ENCODE measurements at regions of chr1 and their contacts with region 1.

Region 1: GRCh38 chr1:89987170-89987819 is 7.6 kb upstream of the ZNF326 start:
- DNase-seq: peak in 12 of 14 experiments; percentile 19 to 83 (median 45)
- ATAC-seq: peak; percentile 93
- H3K4me3 ChIP-seq: no peak overlapping the region
- H3K4me3 Mint-ChIP-seq: no peak overlapping the region
- H3K27ac ChIP-seq: no peak overlapping the region
- H3K27ac Mint-ChIP-seq: no peak overlapping the region
- H3K4me1 ChIP-seq: no peaks in the 10 kb centered on the region
- H3K4me1 Mint-ChIP-seq: no peaks in the 10 kb centered on the region
- H3K27me3 ChIP-seq: no peaks in the 10 kb centered on the region
- H3K27me3 Mint-ChIP-seq: no peaks in the 10 kb centered on the region
- CTCF ChIP-seq: peak; percentile 89

Region 2: GRCh38 chr1:89780721-89781120 is 206.6 kb before region 1 on chr1:
- CTCF ChIA-PET with region 1: interaction called, 4 read pairs
- POLR2A ChIA-PET with region 1: interaction called, 5 read pairs
- intact Hi-C with region 1: loop called (anchors 1 to 2 kb)
- DNase-seq: peak in 3 of 14 experiments; percentile 51 to 66 (median 65)
- ATAC-seq: peak; percentile 80
- H3K4me3 ChIP-seq: no peak overlapping the region
- H3K4me3 Mint-ChIP-seq: no peak overlapping the region
- H3K27ac ChIP-seq: no peak overlapping the region
- H3K27ac Mint-ChIP-seq: no peak overlapping the region
- H3K4me1 ChIP-seq: peaks cover 13% of the 10 kb centered on the region
- H3K4me1 Mint-ChIP-seq: peaks cover 23% of the 10 kb centered on the region
- H3K27me3 ChIP-seq: no peaks in the 10 kb centered on the region
- H3K27me3 Mint-ChIP-seq: no peaks in the 10 kb centered on the region
- CTCF ChIP-seq: peak; percentile 48

Region 3: DNA sequence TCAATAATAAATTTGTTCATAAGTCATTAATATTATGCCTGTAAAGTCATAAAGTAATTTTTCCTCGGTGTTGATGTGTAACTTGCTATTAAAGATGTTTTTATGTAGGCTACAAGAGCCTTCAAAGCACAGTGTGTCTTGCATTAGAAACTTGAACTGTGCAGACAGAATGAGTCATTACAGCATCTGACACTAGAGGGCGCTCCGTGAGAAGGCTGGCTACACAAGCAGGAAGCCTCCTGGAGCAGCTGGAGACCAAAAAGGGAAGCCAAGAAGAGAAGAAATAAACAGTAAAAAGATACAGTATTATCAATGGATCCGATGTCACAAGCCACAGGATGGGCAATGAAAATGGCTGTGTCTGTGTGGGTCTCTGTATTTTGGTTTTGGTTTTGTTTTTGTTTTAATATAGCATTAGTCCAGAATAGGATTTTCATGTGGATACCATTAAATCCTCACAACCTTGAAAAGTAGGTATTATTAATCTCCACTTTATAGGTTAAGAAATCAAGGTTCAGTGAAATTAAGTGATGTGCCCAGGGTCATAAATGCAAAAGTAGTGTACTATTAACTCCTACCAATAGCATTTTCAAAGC is 182.6 kb before region 1 on chr1:
- CTCF ChIA-PET with region 1: interaction called, 24 read pairs
- POLR2A ChIA-PET with region 1: no interaction called
- intact Hi-C with region 1: loop called (anchors 1 kb)
- DNase-seq: peak; percentile 71 to 94 (median 84)
- ATAC-seq: peak; percentile 100
- H3K4me3 ChIP-seq: no peak overlapping the region
- H3K4me3 Mint-ChIP-seq: no peak overlapping the region
- H3K27ac ChIP-seq: no peak overlapping the region
- H3K27ac Mint-ChIP-seq: no peak overlapping the region
- H3K4me1 ChIP-seq: peaks cover 3% of the 10 kb centered on the region
- H3K4me1 Mint-ChIP-seq: no peaks in the 10 kb centered on the region
- H3K27me3 ChIP-seq: no peaks in the 10 kb centered on the region
- H3K27me3 Mint-ChIP-seq: no peaks in the 10 kb centered on the region
- CTCF ChIP-seq: peak; percentile 98